ENCODE measurements at regions of chr4 and their contacts with region 1.

Region 1: GRCh38 chr4:6986781-6987587 is 56.2 kb upstream of the TADA2B start:
- DNase-seq: peak; percentile 97 to 98 (median 97)
- ATAC-seq: peak; percentile 97
- H3K4me3 ChIP-seq: peak overlapping the region; percentile 38
- H3K4me1 ChIP-seq: peaks cover 44% of the 10 kb centered on the region
- CTCF ChIP-seq: no peak

Region 2: DNA sequence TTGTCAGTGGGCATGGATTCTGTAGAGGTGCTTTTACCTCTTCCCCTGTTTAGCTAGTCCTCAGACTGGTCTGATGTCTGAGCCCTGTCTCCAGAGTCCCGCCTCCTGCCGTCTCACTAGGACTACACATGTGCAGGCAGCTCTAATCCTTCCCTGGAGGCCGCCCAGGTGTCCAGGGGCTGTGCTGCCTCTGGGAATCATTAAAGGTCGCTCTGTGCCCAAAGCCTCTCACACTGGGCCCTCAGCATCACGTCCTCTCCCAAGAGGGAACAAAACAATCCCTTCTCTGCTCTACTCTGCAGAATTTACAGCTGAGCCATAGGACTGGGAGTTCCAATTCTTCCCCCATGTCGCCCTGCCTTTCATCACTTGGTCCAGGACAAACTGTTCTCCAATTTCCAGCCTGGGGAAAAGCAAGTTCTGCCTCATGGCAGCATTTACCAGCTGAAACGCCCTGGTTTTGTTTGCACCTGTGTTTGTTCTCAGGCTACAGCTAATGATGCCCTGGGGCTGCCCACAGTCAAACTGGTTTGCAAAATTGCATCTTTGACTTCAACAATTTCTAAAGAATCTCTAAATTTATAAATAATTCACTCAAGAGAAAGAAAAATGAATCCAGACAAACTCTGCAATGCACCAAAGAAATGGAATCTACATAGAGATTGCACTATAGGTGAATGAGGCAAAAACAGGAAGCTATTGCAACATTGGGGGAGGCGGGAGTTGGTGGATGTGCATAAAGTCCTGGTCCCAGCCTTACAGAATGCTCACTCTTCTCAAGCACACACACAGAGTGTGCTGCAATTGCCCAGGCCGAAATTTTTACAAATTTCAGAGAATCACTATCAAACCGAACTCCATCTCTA is 353.7 kb before region 1 on chr4:
- intact Hi-C with region 1: no loop called
- DNase-seq: no peak
- ATAC-seq: no peak
- H3K4me3 ChIP-seq: no peak overlapping the region
- H3K4me1 ChIP-seq: no peaks in the 10 kb centered on the region
- CTCF ChIP-seq: no peak

Region 3: GRCh38 chr4:6768539-6768905 is 218.5 kb before region 1 on chr4:
- intact Hi-C with region 1: no loop called
- DNase-seq: no peak
- ATAC-seq: peak; percentile 43
- H3K4me3 ChIP-seq: no peak overlapping the region
- H3K4me1 ChIP-seq: peaks cover 50% of the 10 kb centered on the region
- CTCF ChIP-seq: no peak

Region 4: DNA sequence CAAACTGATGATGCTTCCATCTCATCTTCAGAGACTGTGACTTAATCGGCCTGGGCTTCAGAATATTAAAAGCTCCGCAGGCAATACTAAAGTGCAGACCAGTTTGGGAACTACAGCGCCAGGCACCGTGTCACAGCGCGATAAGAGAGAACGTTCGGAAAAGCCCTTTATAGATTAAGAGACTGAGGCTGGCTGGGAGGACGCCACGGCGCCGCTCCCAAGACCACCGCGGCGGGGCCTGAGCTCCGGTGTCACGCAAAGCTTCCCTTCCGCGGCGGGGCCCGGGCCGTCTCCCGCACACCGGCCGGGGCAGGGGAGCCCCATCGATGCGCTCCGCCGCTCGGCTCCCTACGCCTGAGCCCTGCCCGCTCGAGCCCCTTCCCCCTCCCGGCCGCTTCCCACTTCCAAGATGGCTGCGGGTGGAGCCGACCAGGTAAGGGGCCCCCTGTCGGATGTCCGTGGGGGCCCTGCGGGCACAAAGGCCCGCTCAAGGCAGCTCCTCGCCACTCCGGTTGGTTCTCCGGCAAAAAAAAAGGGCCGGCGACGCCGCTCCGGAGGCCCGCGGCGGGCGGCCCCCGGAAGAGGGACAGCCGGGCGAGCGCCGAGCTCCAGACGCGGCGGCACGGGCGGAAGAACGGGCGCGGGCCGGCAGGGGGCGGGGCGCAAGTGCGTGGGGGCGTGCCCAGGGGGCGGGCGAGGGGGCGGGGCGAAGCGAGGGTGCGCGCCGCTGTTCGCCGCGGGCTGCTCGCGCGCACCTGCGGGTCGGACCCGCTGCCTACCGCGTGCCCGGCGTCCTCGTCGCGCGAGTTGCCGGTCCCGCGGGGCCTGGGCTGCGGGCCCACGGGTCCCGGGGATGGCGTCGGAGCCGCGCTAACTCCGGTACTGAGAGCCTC is 77.7 kb before region 1 on chr4 and contains the start of gene TBC1D14:
- intact Hi-C with region 1: loop called in 1 of 2 experiments (anchors 10 kb)
- DNase-seq: peak; percentile 88 to 93 (median 91)
- ATAC-seq: peak; percentile 94
- H3K4me3 ChIP-seq: peak within 1 kb of the TSS; percentile 74
- H3K4me1 ChIP-seq: peaks cover 22% of the 10 kb centered on the region
- CTCF ChIP-seq: peak; percentile 13
- total RNA-seq, gene TBC1D14: 51.8 to 70.8 (median 56.2) TPM

Measured in mucosa of descending colon (tissue), 3 donors.